CD4-positive, alpha-beta memory T cell (primary cell): ENCODE measurements at regions of chr10 and their contacts with region 1.

Region 1: GRCh38 chr10:22003079-22003913 is at the start of gene DNAJC1:
- DNase-seq: peak; percentile 96 to 98 (median 96)
- H3K4me3 ChIP-seq: peak within 1 kb of the TSS; percentile 62 to 89
- H3K4me3 Mint-ChIP-seq: peak within 1 kb of the TSS; percentile 94 to 100 (median 98)
- H3K27ac ChIP-seq: peak within 1 kb of the TSS; percentile 84
- H3K27ac Mint-ChIP-seq: peak within 1 kb of the TSS; percentile 91 to 99 (median 97)
- H3K4me1 ChIP-seq: peaks cover 26% of the 10 kb centered on the region
- H3K4me1 Mint-ChIP-seq: peaks cover 23 to 45% (median 34%) of the 10 kb centered on the region in 4 donors
- H3K27me3 ChIP-seq: peaks cover 3% of the 10 kb centered on the region
- H3K27me3 Mint-ChIP-seq: peaks cover 0 to 4% of the 10 kb centered on the region in 2 donors
- total RNA-seq, gene DNAJC1: 15.0 to 16.7 TPM

Region 2: GRCh38 chr10:21525367-21526183 is 477.7 kb before region 1 on chr10 and contains the start of gene SKIDA1:
- CTCF ChIA-PET with region 1: interaction called, 3 read pairs
- POLR2A ChIA-PET with region 1: interaction called, 6 read pairs
- intact Hi-C with region 1: loop called (anchors 2 kb)
- DNase-seq: peak; percentile 69 to 81 (median 75)
- H3K4me3 ChIP-seq: peak within 1 kb of the TSS; percentile 55 to 78
- H3K4me3 Mint-ChIP-seq: peak within 1 kb of the TSS; percentile 93 to 99 (median 96)
- H3K27ac ChIP-seq: peak within 1 kb of the TSS; percentile 63
- H3K27ac Mint-ChIP-seq: peak within 1 kb of the TSS; percentile 84 to 98 (median 98)
- H3K4me1 ChIP-seq: peaks cover 23% of the 10 kb centered on the region
- H3K4me1 Mint-ChIP-seq: peaks cover 9 to 36% (median 21%) of the 10 kb centered on the region in 4 donors
- H3K27me3 ChIP-seq: peaks cover 7% of the 10 kb centered on the region
- H3K27me3 Mint-ChIP-seq: peaks cover 9 to 12% of the 10 kb centered on the region in 2 donors
- total RNA-seq, gene SKIDA1: 0.39 to 0.73 TPM

Region 3: GRCh38 chr10:22251751-22252223 is 248.5 kb after region 1 on chr10:
- CTCF ChIA-PET with region 1: no interaction called
- POLR2A ChIA-PET with region 1: interaction called, 6 read pairs
- intact Hi-C with region 1: loop called (anchors 1 kb)
- DNase-seq: peak; percentile 76 to 80 (median 78)
- H3K4me3 ChIP-seq: peak overlapping the region; percentile 70 to 97
- H3K4me3 Mint-ChIP-seq: peak overlapping the region; percentile 89 to 99 (median 96)
- H3K27ac ChIP-seq: peak overlapping the region; percentile 78
- H3K27ac Mint-ChIP-seq: peak overlapping the region; percentile 96 to 100 (median 98)
- H3K4me1 ChIP-seq: peaks cover 43% of the 10 kb centered on the region
- H3K4me1 Mint-ChIP-seq: peaks cover 12 to 58% (median 35%) of the 10 kb centered on the region in 4 donors
- H3K27me3 ChIP-seq: no peaks in the 10 kb centered on the region
- H3K27me3 Mint-ChIP-seq: peaks cover 0 to 2% of the 10 kb centered on the region in 2 donors

Region 4: DNA sequence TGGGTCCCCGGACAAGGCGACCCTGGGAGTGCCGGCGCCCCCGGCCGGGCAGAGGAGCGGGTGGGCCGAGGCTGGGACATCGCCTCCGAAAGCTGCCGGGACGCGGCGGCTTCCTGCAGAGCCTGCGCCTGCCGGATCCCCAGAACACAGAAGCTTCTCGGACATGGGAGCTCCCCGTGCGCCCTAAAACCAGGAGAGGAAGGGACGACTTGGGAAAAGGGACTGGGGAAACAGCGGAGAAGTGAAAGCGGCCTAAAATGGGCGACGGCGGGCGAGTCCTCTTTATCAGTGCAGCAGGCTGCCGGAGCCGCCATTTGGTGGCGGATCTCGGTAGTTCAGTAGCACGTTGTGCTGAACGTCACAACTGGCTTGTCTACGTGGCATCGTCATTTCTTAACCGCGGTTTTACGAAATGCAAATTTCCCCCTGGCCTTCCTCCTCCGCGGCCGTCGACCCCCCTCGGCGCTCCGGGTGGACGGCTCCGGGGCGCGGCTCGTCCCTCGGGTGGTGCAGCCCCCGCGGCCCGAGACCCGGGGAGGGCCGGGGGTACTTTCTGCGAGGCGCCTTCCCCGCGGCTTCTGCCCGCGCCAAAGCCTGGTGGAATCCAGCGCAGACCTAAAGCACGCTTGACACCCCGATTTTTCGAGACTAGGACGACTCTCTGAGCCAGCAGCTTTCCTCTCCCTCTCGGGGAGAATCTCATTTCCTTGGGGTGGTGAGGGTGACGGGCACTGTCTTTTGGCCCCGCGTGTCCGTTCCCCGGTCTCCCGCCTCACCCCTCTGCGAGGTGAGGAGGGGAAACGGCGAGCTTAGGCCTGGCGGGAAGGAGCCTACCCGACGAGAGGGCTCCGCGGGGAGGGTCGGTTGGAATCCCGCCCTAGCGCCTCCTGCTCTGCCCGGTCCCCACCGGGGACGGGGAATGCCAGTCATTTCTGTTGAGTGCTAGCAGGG is 332.2 kb after region 1 on chr10:
- CTCF ChIA-PET with region 1: no interaction called
- POLR2A ChIA-PET with region 1: interaction called, 6 read pairs
- intact Hi-C with region 1: loop called (anchors 2 kb)
- DNase-seq: peak; percentile 80 to 88 (median 84)
- H3K4me3 ChIP-seq: peak overlapping the region; percentile 9 to 52
- H3K4me3 Mint-ChIP-seq: peak overlapping the region; percentile 84 to 96 (median 87)
- H3K27ac ChIP-seq: peak overlapping the region; percentile 58
- H3K27ac Mint-ChIP-seq: peak overlapping the region; percentile 92 to 96 (median 95)
- H3K4me1 ChIP-seq: peaks cover 59% of the 10 kb centered on the region
- H3K4me1 Mint-ChIP-seq: peaks cover 23 to 54% (median 34%) of the 10 kb centered on the region in 4 donors
- H3K27me3 ChIP-seq: peaks cover 45% of the 10 kb centered on the region
- H3K27me3 Mint-ChIP-seq: peaks cover 23 to 40% of the 10 kb centered on the region in 2 donors

Region 5: GRCh38 chr10:22573820-22574569 is 570.7 kb after region 1 on chr10:
- CTCF ChIA-PET with region 1: interaction called, 3 read pairs
- POLR2A ChIA-PET with region 1: no interaction called
- intact Hi-C with region 1: loop called (anchors 5 kb)
- DNase-seq: peak; percentile 17 to 40 (median 21)
- H3K4me3 ChIP-seq: no peak overlapping the region
- H3K4me3 Mint-ChIP-seq: peak overlapping the region in 3 of 8 donors; percentile 9 to 77 (median 31)
- H3K27ac ChIP-seq: no peak overlapping the region
- H3K27ac Mint-ChIP-seq: peak overlapping the region; percentile 27 to 78 (median 72)
- H3K4me1 ChIP-seq: peaks cover 37% of the 10 kb centered on the region
- H3K4me1 Mint-ChIP-seq: peaks cover 39 to 77% (median 58%) of the 10 kb centered on the region in 4 donors
- H3K27me3 ChIP-seq: no peaks in the 10 kb centered on the region
- H3K27me3 Mint-ChIP-seq: no peaks in the 10 kb centered on the region